ENCODE measurements at regions of chr6 and their contacts with region 1.

Region 1: GRCh38 chr6:7312616-7313504 is at the start of gene SSR1:
- DNase-seq: peak; percentile 94
- ATAC-seq: peak; percentile 98
- H3K4me3 Mint-ChIP-seq: peak within 1 kb of the TSS; percentile 94
- H3K27ac Mint-ChIP-seq: peak within 1 kb of the TSS; percentile 84
- H3K4me1 Mint-ChIP-seq: peaks cover 39% of the 10 kb centered on the region
- H3K27me3 Mint-ChIP-seq: no peaks in the 10 kb centered on the region
- CTCF ChIP-seq: no peak
- total RNA-seq, gene SSR1: 83.4 and 86.7 TPM in 2 replicates

Region 2: GRCh38 chr6:7058250-7058923 is 254.5 kb before region 1 on chr6:
- CTCF ChIA-PET with region 1: no interaction called
- POLR2A ChIA-PET with region 1: no interaction called
- intact Hi-C with region 1: loop called (anchors 5 kb)
- DNase-seq: no peak
- ATAC-seq: no peak
- H3K4me3 Mint-ChIP-seq: no peak overlapping the region
- H3K27ac Mint-ChIP-seq: no peak overlapping the region
- H3K4me1 Mint-ChIP-seq: peaks cover 15% of the 10 kb centered on the region
- H3K27me3 Mint-ChIP-seq: no peaks in the 10 kb centered on the region
- CTCF ChIP-seq: no peak

Region 3: DNA sequence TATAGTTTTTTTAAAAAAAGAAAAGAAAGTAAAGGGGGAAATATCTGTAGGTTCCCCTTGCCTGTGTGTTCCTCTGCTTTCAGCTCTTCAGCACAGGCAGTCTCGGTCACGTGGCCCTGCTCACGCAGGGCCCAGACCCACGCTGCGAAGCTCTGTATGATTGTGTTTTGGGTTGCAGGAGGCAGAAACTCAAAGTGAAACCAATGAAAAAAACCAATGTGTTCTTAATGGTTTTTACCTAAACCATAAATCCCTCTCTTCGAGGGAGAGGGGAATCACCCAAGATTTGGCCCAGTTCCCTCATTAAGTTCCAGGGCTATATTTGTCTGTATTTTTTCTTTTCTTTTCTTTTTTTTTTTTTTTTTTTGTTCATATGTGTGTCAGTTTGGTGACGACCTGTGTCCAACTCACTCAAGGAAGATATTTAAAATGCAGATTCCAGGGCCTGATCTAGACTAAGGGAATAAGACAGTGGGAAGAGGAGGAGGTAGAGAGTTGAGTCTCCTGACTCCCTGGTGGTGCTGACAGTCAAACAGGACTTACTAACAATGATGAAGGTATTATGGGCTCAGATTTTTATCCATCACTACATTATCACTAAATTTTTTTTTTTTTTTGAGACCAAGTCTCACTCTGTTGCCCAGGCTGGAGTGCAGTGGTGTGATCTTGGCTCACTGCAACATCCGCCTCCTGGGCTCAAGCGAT is 238.9 kb before region 1 on chr6:
- CTCF ChIA-PET with region 1: no interaction called
- POLR2A ChIA-PET with region 1: no interaction called
- intact Hi-C with region 1: no loop called
- DNase-seq: peak; percentile 58
- ATAC-seq: peak; percentile 98
- H3K4me3 Mint-ChIP-seq: peak overlapping the region; percentile 57
- H3K27ac Mint-ChIP-seq: peak overlapping the region; percentile 87
- H3K4me1 Mint-ChIP-seq: peaks cover 28% of the 10 kb centered on the region
- H3K27me3 Mint-ChIP-seq: no peaks in the 10 kb centered on the region
- CTCF ChIP-seq: no peak

Region 4: DNA sequence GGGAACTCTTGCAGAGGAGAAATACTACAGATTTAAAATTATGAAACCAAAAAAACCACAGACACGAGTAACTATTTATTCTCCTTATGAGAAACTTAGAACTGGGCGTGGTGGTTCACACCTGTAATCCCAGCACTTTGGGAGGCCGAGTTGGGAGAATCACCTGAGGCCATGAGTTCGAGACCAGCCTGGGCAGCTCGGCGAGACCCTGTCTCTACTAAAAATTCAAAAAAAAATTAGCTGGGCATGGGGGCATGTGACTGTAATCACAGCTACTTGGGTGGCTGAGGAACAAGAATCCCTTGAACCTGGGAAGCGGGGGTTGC is 36.7 kb before region 1 on chr6:
- CTCF ChIA-PET with region 1: no interaction called
- POLR2A ChIA-PET with region 1: interaction called, 19 read pairs
- intact Hi-C with region 1: loop called (anchors 1 kb)
- DNase-seq: no peak
- ATAC-seq: no peak
- H3K4me3 Mint-ChIP-seq: peak overlapping the region; percentile 53
- H3K27ac Mint-ChIP-seq: peak overlapping the region; percentile 67
- H3K4me1 Mint-ChIP-seq: peaks cover 36% of the 10 kb centered on the region
- H3K27me3 Mint-ChIP-seq: no peaks in the 10 kb centered on the region
- CTCF ChIP-seq: no peak

Region 5: DNA sequence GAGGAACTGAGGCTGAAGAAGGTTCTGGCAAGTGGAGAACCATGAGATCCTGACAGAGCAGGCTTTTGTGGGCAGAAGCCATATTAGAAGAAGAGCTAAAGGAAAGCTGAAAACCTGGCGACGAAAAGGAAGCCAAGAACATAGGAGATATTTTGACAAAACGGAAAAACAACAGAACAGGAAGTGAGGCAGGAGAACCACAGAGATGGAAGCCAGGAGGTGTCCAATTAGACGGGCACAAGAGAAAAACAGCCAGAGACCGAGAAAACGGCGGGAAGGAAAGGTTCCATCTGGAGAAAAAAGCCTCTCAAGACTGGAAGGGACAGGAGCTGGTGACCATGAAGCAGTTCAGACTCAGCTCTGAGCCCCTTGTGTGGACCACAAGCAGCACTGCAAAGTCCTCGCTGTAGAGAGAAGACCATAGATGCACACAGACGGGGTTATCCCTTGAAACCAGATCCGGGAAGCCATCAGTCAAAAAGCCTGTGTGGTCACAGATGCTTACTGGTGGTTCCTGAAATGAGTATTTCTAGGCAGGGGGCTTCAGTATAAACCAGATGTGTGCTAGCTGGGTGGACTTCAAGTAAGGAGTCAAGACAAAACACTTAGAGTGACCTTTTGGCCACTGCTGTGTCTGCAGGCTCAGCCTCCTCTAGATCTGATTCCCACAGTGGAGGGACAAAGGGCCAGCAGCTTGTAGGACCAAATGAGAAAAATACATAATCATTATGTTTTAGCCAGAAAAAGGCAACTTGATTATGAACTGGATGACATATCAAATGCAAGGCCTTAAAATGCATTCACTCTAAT is 30.6 kb before region 1 on chr6:
- CTCF ChIA-PET with region 1: no interaction called
- POLR2A ChIA-PET with region 1: interaction called, 19 read pairs
- intact Hi-C with region 1: loop called (anchors 1 kb)
- DNase-seq: no peak
- ATAC-seq: no peak
- H3K4me3 Mint-ChIP-seq: no peak overlapping the region
- H3K27ac Mint-ChIP-seq: peak overlapping the region; percentile 41
- H3K4me1 Mint-ChIP-seq: peaks cover 32% of the 10 kb centered on the region
- H3K27me3 Mint-ChIP-seq: no peaks in the 10 kb centered on the region
- CTCF ChIP-seq: no peak

Region 6: DNA sequence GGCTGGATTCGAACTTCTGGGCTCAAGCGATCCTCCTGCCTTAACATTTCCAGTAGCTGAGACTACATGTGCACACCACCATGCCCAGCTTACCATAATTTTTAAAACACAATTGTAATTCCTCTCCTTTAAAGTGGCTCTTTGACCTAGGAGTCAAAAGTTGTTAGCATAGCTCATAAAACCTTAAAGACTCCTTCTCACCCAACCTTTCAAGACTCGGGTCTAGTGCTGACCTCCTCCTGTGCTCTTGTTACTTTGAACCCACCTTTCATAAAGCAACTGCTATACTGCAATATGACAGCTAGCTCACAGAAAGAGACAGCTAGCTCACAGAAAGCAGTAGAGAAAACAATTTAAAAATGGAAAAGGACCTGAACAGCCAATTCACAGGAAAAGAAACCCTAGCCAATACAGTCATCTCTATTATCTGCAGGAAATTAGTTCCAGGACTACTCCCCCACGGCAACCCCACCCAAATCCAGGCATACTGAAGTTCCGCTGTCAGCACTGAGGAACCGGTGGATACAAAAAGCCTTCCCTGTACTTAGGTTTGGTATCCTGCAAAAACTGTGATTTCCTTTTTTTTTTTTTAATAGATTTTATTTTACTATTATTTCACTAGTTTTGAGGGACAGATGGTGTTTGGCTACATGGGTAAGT is 20.1 kb before region 1 on chr6:
- CTCF ChIA-PET with region 1: no interaction called
- POLR2A ChIA-PET with region 1: no interaction called
- intact Hi-C with region 1: loop called (anchors 1 kb)
- DNase-seq: no peak
- ATAC-seq: no peak
- H3K4me3 Mint-ChIP-seq: no peak overlapping the region
- H3K27ac Mint-ChIP-seq: no peak overlapping the region
- H3K4me1 Mint-ChIP-seq: peaks cover 2% of the 10 kb centered on the region
- H3K27me3 Mint-ChIP-seq: no peaks in the 10 kb centered on the region
- CTCF ChIP-seq: no peak

Region 7: DNA sequence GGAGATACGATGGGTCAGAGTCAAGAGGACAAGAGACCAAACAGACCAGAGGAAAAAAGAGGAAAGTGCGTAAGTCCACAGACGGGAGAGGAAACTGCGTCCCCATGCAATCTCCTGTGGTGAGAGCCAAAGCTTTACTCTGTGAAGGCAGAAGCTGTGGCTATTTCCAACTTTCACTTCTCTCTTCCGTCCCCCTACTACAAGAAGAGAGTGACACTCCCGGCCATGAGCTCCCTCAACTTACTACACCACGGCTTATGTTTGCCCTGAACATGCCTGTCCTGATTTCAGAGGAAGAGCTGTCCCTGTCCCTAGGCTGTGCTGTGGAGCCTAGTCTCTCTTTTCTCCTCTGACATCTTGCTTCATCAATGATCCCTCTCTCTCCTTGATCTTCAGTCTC is 11.7 kb after region 1 on chr6:
- CTCF ChIA-PET with region 1: no interaction called
- POLR2A ChIA-PET with region 1: interaction called, 4 read pairs
- intact Hi-C with region 1: loop called (anchors 1 kb)
- DNase-seq: no peak
- ATAC-seq: peak; percentile 88
- H3K4me3 Mint-ChIP-seq: peak overlapping the region; percentile 25
- H3K27ac Mint-ChIP-seq: peak overlapping the region; percentile 76
- H3K4me1 Mint-ChIP-seq: peaks cover 17% of the 10 kb centered on the region
- H3K27me3 Mint-ChIP-seq: no peaks in the 10 kb centered on the region
- CTCF ChIP-seq: no peak

Region 8: DNA sequence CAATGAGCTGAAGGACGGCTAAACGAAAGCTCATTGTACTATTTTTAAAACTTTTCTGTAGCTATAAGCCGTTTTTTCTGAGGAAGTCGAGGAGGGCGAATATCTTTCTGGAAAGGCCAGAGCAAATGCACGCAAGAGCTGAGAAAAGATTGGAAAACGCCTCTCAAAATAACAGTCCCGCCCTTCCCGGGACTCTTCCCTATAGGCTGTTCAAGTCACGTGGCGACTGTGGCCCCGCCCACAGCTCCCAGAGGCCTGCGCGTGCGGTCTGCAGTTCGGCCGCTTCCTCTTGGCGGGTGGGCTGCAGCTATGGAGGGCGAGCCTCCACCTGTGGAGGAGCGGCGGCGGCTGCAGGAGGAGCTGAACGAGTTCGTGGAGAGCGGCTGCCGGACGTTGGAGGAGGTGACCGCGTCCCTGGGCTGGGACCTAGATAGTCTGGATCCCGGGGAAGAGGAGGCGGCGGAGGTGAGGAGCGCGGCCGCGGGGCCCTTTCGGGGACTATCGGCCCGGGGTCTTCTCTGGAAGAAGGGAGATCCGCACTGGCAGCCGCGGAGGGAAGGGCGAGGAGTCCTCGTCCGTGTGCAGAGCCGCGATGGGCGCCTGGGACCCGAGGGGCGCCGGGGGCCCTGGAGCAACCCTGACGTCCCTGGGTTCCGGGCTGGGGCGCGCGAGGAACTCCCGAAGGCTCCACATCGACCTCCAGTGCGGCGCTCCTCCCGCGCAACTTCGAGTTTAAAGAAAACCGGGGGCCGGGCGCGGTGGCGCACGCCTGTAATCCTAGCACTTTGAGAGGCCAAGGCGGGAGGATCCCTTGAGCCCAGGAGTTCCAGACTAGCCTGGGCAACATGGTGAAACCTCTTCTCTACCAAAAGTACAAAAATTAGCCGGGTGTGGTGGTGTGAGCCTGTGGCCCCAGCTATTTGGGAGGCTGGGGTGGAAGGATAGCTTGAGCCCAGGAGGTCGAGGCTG is 277.4 kb after region 1 on chr6 and contains the start of gene SNRNP48:
- CTCF ChIA-PET with region 1: no interaction called
- POLR2A ChIA-PET with region 1: interaction called, 7 read pairs
- intact Hi-C with region 1: loop called (anchors 1 kb)
- DNase-seq: peak; percentile 88
- ATAC-seq: peak; percentile 100
- H3K4me3 Mint-ChIP-seq: peak within 1 kb of the TSS; percentile 98
- H3K27ac Mint-ChIP-seq: peak within 1 kb of the TSS; percentile 84
- H3K4me1 Mint-ChIP-seq: peaks cover 31% of the 10 kb centered on the region
- H3K27me3 Mint-ChIP-seq: no peaks in the 10 kb centered on the region
- CTCF ChIP-seq: no peak
- total RNA-seq, gene SNRNP48: 15.4 and 18.7 TPM in 2 replicates

Measured in activated B cell treated with CpG ODN at 0.5 μM for 24 hours (primary cell).